ENCODE measurements at regions of chr9 and their contacts with region 1.

Region 1: DNA sequence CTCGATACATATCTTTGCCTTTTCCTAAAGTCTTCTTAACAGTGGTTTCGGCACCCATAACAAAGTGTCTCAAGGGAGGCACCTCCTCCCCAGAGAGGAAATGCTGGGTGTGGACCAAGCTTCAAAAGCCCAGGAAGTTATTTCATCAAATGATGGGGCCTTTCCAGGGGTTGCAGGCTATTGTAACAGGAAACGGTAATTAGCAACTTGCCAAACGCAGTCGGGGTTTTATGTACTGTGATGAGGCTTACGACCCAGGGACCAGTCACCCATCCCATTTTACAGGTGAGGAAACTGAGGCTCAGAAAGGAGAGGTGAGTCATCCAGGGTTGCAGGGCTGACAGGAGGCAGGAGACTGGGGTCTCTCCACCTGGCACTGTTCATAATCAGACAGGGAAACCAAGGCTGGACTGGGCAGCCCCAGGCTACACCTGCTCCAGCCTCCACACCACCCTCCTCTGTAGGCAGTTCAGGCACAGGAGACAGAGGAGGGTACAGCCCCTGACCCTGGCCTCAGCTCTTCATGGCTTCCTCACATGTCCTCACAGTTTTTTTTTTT is 30.0 kb upstream of the SUSD3 start:
- DNase-seq: peak; percentile 81
- ATAC-seq: peak; percentile 91
- H3K4me3 ChIP-seq: peak overlapping the region in 4 of 5 experiments; percentile 4 to 38 (median 22)
- H3K4me3 Mint-ChIP-seq: peak overlapping the region; percentile 85
- H3K27ac ChIP-seq: peak overlapping the region; percentile 70 to 72
- H3K27ac Mint-ChIP-seq: peak overlapping the region; percentile 95
- H3K4me1 ChIP-seq: peaks cover 33 to 49% of the 10 kb centered on the region in 2 donors
- H3K4me1 Mint-ChIP-seq: peaks cover 61% of the 10 kb centered on the region
- H3K27me3 ChIP-seq: no peaks in the 10 kb centered on the region
- H3K27me3 Mint-ChIP-seq: no peaks in the 10 kb centered on the region
- CTCF ChIP-seq: no peak

Region 2: GRCh38 chr9:93064392-93065134 is 36.0 kb after region 1 on chr9:
- CTCF ChIA-PET with region 1: interaction called, 7 read pairs
- POLR2A ChIA-PET with region 1: interaction called, 27 read pairs
- intact Hi-C with region 1: no loop called
- DNase-seq: peak; percentile 89
- ATAC-seq: peak; percentile 78
- H3K4me3 ChIP-seq: peak overlapping the region in 4 of 5 experiments; percentile 5 to 36 (median 18)
- H3K4me3 Mint-ChIP-seq: peak overlapping the region; percentile 92
- H3K27ac ChIP-seq: peak overlapping the region; percentile 74 to 78
- H3K27ac Mint-ChIP-seq: peak overlapping the region; percentile 99
- H3K4me1 ChIP-seq: peaks cover 63 to 65% of the 10 kb centered on the region in 2 donors
- H3K4me1 Mint-ChIP-seq: peaks cover 81% of the 10 kb centered on the region
- H3K27me3 ChIP-seq: no peaks in the 10 kb centered on the region
- H3K27me3 Mint-ChIP-seq: no peaks in the 10 kb centered on the region
- CTCF ChIP-seq: no peak